ENCODE measurements at regions of chr1 and their contacts with region 1.

Region 1: DNA sequence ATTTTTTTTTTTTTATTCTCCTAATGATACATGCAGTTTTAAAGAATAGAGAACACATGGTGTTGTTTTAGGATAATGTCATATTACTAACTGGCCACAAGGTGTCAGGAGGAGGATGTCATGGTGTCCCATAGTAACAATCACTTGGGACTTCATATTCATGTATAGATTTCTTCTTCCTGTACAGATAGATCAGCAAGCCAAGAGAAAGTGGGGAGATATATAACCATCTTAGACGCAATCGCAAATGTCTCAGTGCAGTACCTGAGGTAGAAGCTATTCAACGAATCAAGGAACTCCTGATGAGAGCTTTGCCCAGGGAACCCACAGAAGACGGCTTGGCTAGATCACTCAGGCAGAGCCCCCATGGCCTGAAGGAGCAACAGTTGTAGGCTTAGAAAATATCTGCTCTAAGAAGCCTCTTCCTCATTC is 12.3 kb downstream of the OR2T11 start:
- DNase-seq: no peak
- ATAC-seq: peak; percentile 97
- H3K4me3 Mint-ChIP-seq: no peak overlapping the region
- H3K27ac Mint-ChIP-seq: peak overlapping the region; percentile 84
- H3K4me1 Mint-ChIP-seq: peaks cover 12% of the 10 kb centered on the region
- H3K27me3 Mint-ChIP-seq: no peaks in the 10 kb centered on the region
- CTCF ChIP-seq: no peak

Region 2: GRCh38 chr1:247936415-247936814 is 686.2 kb before region 1 on chr1:
- CTCF ChIA-PET with region 1: no interaction called
- POLR2A ChIA-PET with region 1: no interaction called
- intact Hi-C with region 1: loop called (anchors 10 kb)
- DNase-seq: no peak
- ATAC-seq: no peak
- H3K4me3 Mint-ChIP-seq: no peak overlapping the region
- H3K27ac Mint-ChIP-seq: no peak overlapping the region
- H3K4me1 Mint-ChIP-seq: no peaks in the 10 kb centered on the region
- H3K27me3 Mint-ChIP-seq: no peaks in the 10 kb centered on the region
- CTCF ChIP-seq: no peak

Region 3: DNA sequence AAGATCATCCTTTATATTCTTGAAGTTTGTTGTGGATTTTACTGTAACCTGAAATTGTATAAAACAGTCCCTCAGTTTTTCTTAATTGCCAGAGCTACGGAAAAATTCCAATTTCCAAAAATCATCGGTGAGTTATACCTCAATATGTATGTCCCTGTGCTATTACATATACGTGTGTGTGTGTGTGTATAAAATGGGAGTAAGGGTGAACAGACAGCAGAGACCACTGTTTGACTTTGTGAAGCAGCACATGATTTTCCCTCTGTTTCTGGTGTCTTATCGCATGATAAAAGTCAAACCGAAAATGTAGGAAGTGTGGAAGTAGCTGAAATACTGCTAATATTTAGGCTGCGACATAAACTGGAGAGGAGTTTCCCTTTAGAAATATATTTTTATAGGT is 218.6 kb before region 1 on chr1:
- CTCF ChIA-PET with region 1: no interaction called
- POLR2A ChIA-PET with region 1: no interaction called
- intact Hi-C with region 1: loop called (anchors 1 kb)
- DNase-seq: no peak
- ATAC-seq: no peak
- H3K4me3 Mint-ChIP-seq: no peak overlapping the region
- H3K27ac Mint-ChIP-seq: peak overlapping the region; percentile 0
- H3K4me1 Mint-ChIP-seq: no peaks in the 10 kb centered on the region
- H3K27me3 Mint-ChIP-seq: no peaks in the 10 kb centered on the region
- CTCF ChIP-seq: no peak

Region 4: GRCh38 chr1:248696261-248696660 is 73.7 kb after region 1 on chr1:
- CTCF ChIA-PET with region 1: interaction called, 67 read pairs
- POLR2A ChIA-PET with region 1: no interaction called
- intact Hi-C with region 1: loop called (anchors 2 kb)
- DNase-seq: no peak
- ATAC-seq: no peak
- H3K4me3 Mint-ChIP-seq: no peak overlapping the region
- H3K27ac Mint-ChIP-seq: peak overlapping the region; percentile 61
- H3K4me1 Mint-ChIP-seq: peaks cover 16% of the 10 kb centered on the region
- H3K27me3 Mint-ChIP-seq: no peaks in the 10 kb centered on the region
- CTCF ChIP-seq: no peak

Region 5: GRCh38 chr1:248873409-248873992 is 250.9 kb after region 1 on chr1:
- CTCF ChIA-PET with region 1: no interaction called
- POLR2A ChIA-PET with region 1: no interaction called
- intact Hi-C with region 1: loop called (anchors 1 kb)
- DNase-seq: peak; percentile 91
- ATAC-seq: peak; percentile 80
- H3K4me3 Mint-ChIP-seq: peak overlapping the region; percentile 95
- H3K27ac Mint-ChIP-seq: peak overlapping the region; percentile 97
- H3K4me1 Mint-ChIP-seq: peaks cover 19% of the 10 kb centered on the region
- H3K27me3 Mint-ChIP-seq: peaks cover 8% of the 10 kb centered on the region
- CTCF ChIP-seq: no peak